ENCODE measurements at regions of chr5 and their contacts with region 1.

Region 1: GRCh38 chr5:134140530-134141201 is 26.2 kb downstream of the TCF7 start:
- DNase-seq: peak; percentile 78
- H3K4me3 Mint-ChIP-seq: no peak overlapping the region
- H3K27ac Mint-ChIP-seq: no peak overlapping the region
- H3K4me1 Mint-ChIP-seq: peaks cover 16% of the 10 kb centered on the region
- H3K27me3 Mint-ChIP-seq: no peaks in the 10 kb centered on the region
- CTCF ChIP-seq: peak; percentile 94

Region 2: GRCh38 chr5:133868946-133869518 is 271.6 kb before region 1 on chr5:
- CTCF ChIA-PET with region 1: no interaction called
- intact Hi-C with region 1: no loop called
- DNase-seq: peak; percentile 84
- H3K4me3 Mint-ChIP-seq: no peak overlapping the region
- H3K27ac Mint-ChIP-seq: no peak overlapping the region
- H3K4me1 Mint-ChIP-seq: no peaks in the 10 kb centered on the region
- H3K27me3 Mint-ChIP-seq: peaks cover 63% of the 10 kb centered on the region
- CTCF ChIP-seq: peak; percentile 81

Region 3: GRCh38 chr5:134026521-134027268 is 114.0 kb before region 1 on chr5:
- CTCF ChIA-PET with region 1: interaction called, 14 read pairs
- intact Hi-C with region 1: no loop called
- DNase-seq: peak; percentile 82
- H3K4me3 Mint-ChIP-seq: no peak overlapping the region
- H3K27ac Mint-ChIP-seq: no peak overlapping the region
- H3K4me1 Mint-ChIP-seq: peaks cover 28% of the 10 kb centered on the region
- H3K27me3 Mint-ChIP-seq: no peaks in the 10 kb centered on the region
- CTCF ChIP-seq: peak; percentile 59

Region 4: GRCh38 chr5:134101686-134102439 is 38.8 kb before region 1 on chr5:
- CTCF ChIA-PET with region 1: interaction called, 10 read pairs
- intact Hi-C with region 1: loop called (anchors 1 kb)
- DNase-seq: peak; percentile 79
- H3K4me3 Mint-ChIP-seq: no peak overlapping the region
- H3K27ac Mint-ChIP-seq: no peak overlapping the region
- H3K4me1 Mint-ChIP-seq: peaks cover 28% of the 10 kb centered on the region
- H3K27me3 Mint-ChIP-seq: no peaks in the 10 kb centered on the region
- CTCF ChIP-seq: peak; percentile 93

Region 5: GRCh38 chr5:134125039-134126015 is 15.3 kb before region 1 on chr5:
- CTCF ChIA-PET with region 1: interaction called, 13 read pairs
- intact Hi-C with region 1: no loop called
- DNase-seq: peak; percentile 23
- H3K4me3 Mint-ChIP-seq: no peak overlapping the region
- H3K27ac Mint-ChIP-seq: peak overlapping the region; percentile 44
- H3K4me1 Mint-ChIP-seq: peaks cover 12% of the 10 kb centered on the region
- H3K27me3 Mint-ChIP-seq: no peaks in the 10 kb centered on the region
- CTCF ChIP-seq: no peak

Region 6: GRCh38 chr5:134436523-134437339 is 296.1 kb after region 1 on chr5:
- CTCF ChIA-PET with region 1: no interaction called
- intact Hi-C with region 1: no loop called
- DNase-seq: peak; percentile 91
- H3K4me3 Mint-ChIP-seq: peak overlapping the region; percentile 29
- H3K27ac Mint-ChIP-seq: peak overlapping the region; percentile 80
- H3K4me1 Mint-ChIP-seq: peaks cover 62% of the 10 kb centered on the region
- H3K27me3 Mint-ChIP-seq: no peaks in the 10 kb centered on the region
- CTCF ChIP-seq: no peak

Region 7: GRCh38 chr5:134511788-134512650 is 371.4 kb after region 1 on chr5:
- CTCF ChIA-PET with region 1: no interaction called
- intact Hi-C with region 1: no loop called
- DNase-seq: peak; percentile 64
- H3K4me3 Mint-ChIP-seq: peak overlapping the region; percentile 64
- H3K27ac Mint-ChIP-seq: peak overlapping the region; percentile 87
- H3K4me1 Mint-ChIP-seq: peaks cover 60% of the 10 kb centered on the region
- H3K27me3 Mint-ChIP-seq: no peaks in the 10 kb centered on the region
- CTCF ChIP-seq: peak; percentile 51

Region 8: DNA sequence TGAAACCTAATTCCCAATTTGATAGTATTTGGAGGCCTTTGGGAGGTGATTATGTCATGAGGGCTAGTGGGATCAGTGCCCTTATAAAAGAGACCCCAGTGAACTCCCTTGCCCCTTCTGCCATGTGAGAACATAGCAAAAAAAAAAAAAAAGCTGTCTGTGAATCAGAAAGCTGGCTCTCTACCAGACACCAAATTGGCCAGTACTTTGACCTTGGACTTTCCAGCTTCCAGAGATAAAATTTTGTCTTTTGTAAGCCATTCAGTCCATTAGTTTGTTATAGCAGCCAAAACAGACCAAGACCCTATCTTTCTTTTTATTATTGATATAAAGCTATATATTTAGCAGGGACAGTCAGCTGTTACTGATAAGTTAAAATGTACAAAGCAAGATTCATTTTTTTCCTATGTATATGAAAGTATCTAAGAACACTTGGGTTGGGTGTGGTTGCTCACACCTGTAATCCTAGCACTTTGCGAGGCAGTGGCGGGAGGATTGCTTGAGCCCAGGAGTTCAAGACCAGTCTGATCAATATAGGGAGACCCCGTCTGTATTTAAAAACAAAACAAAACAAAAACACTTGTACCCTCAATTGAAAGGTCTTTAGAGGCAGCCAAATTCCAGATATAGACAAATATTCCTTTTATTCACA is 697.0 kb after region 1 on chr5:
- CTCF ChIA-PET with region 1: no interaction called
- intact Hi-C with region 1: no loop called
- DNase-seq: no peak
- H3K4me3 Mint-ChIP-seq: no peak overlapping the region
- H3K27ac Mint-ChIP-seq: no peak overlapping the region
- H3K4me1 Mint-ChIP-seq: no peaks in the 10 kb centered on the region
- H3K27me3 Mint-ChIP-seq: no peaks in the 10 kb centered on the region
- CTCF ChIP-seq: no peak